Activated B cell treated with CpG ODN at 0.5 μM for 24 hours (primary cell): ENCODE measurements at regions of chrX and their contacts with region 1.

Region 1: GRCh38 chrX:154121891-154122331 is 22.1 kb upstream of the OPN1LW start:
- DNase-seq: no peak
- ATAC-seq: no peak
- H3K4me3 Mint-ChIP-seq: no peak overlapping the region
- H3K27ac Mint-ChIP-seq: no peak overlapping the region
- H3K4me1 Mint-ChIP-seq: peaks cover 20% of the 10 kb centered on the region
- H3K27me3 Mint-ChIP-seq: no peaks in the 10 kb centered on the region
- CTCF ChIP-seq: no peak

Region 2: DNA sequence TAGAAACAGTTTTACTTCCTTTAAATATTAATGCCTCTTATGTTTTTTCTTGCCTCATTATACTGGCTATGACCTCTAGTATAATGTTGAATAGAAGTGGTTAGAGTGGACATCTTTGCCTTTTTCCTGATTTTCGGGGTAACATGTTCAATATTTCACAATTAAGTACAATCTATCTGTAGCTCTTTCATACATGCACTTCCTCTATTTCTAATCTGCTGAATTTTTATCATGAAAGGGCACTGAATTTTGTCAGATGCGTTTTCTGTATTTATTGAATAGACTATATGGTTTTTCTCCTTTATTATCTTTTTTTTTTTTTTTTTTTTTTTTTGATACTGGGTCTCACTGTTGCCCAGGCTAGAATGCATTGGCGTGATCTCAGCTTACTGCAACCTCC is 53.4 kb before region 1 on chrX:
- CTCF ChIA-PET with region 1: no interaction called
- POLR2A ChIA-PET with region 1: no interaction called
- intact Hi-C with region 1: loop called (anchors 2 kb)
- DNase-seq: no peak
- ATAC-seq: no peak
- H3K4me3 Mint-ChIP-seq: no peak overlapping the region
- H3K27ac Mint-ChIP-seq: no peak overlapping the region
- H3K4me1 Mint-ChIP-seq: peaks cover 49% of the 10 kb centered on the region
- H3K27me3 Mint-ChIP-seq: no peaks in the 10 kb centered on the region
- CTCF ChIP-seq: no peak